Calu3 (cell line): ENCODE measurements at regions of chr19 and their contacts with region 1.

Region 1: DNA sequence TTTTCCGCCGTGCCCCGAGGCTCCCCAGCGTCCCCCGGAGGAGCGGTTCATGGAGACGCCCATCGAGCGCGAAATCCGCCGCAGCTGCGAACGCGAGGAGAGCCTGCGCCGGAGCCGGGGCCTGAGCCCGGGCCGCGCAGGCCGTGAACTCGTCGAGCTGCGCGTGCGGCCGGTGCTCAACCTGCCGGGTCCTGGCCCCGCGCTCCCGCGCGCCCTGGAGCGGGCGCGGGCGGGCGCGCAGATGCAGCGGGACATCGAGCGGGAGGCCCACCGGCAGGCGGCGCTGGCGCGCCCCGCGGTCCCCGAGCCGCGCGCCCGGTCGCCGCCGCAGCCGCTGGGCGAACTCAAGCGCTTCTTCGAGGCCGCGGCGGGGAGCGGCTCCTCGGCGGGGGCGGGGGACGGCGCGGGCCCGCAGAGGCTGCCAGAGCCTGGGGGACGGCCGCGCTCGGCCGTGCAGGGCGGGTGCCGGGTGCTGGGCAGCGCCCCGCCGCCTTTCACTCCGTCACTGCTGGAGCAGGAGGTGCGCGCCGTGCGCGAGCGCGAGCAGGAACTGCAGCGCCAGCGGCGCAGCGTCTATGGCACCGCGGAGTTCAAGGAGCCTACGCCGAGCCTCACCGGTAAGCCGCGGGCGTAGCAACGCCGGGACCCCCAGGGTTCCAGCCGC is 807 bp downstream of the MISP3 start:
- DNase-seq: peak; percentile 78
- H3K4me3 Mint-ChIP-seq: peak overlapping the region; percentile 92
- H3K27ac Mint-ChIP-seq: peak overlapping the region; percentile 67
- H3K4me1 Mint-ChIP-seq: no peaks in the 10 kb centered on the region
- H3K27me3 Mint-ChIP-seq: no peaks in the 10 kb centered on the region
- CTCF ChIP-seq: peak; percentile 35

Region 2: GRCh38 chr19:13880059-13881043 is 193.0 kb before region 1 on chr19:
- CTCF ChIA-PET with region 1: interaction called, 8 read pairs
- intact Hi-C with region 1: loop called (anchors 2 kb)
- DNase-seq: peak; percentile 97
- H3K4me3 Mint-ChIP-seq: no peak overlapping the region
- H3K27ac Mint-ChIP-seq: no peak overlapping the region
- H3K4me1 Mint-ChIP-seq: no peaks in the 10 kb centered on the region
- H3K27me3 Mint-ChIP-seq: no peaks in the 10 kb centered on the region
- CTCF ChIP-seq: peak; percentile 92